Activated CD4-positive, alpha-beta memory T cell treated with anti-CD3 and anti-CD28 coated beads, Interleukin-2, amount 10 ng/mL, durations not matched to agents 7 days and 5 days (primary cell): ENCODE measurements at regions of chr9 and their contacts with region 1.

Region 1: DNA sequence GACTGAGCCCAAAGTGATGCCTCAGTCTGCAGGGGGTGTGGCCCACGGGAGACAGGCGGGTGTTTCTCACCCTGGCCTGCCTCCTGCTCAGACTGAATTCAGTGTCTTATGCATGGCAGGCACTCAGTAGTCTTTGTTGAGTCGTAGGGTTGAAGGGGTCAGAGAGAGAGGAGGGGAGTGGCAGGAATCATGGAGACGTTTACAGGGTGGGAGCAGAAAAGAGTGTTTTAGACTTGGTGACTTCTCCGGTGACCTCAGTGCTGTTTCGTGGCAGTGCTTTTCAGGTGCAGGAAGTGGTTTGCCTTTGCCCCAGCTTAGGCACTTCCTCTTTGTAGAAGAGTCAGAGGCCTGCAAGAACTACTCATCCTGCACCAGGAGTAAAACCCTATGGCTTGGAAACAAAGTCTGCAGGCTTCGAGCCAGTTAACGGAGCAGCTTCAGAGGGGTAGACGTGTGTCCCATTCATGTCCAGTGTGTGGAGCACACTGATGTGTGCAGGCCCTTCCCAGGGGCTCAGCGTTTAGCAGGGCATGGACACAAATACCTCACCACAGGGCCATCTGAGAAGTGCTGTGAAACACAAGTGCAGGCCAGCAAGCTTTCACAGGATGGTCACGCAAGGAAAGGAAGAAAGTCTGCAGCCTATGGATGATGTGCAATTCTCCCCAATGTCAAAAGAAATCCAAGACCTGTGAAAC is 24.5 kb upstream of the SEMA4D start:
- DNase-seq: peak; percentile 88
- H3K4me3 Mint-ChIP-seq: peak overlapping the region; percentile 61
- H3K27ac Mint-ChIP-seq: peak overlapping the region; percentile 100
- H3K4me1 Mint-ChIP-seq: peaks cover 92% of the 10 kb centered on the region
- H3K27me3 Mint-ChIP-seq: no peaks in the 10 kb centered on the region

Region 2: DNA sequence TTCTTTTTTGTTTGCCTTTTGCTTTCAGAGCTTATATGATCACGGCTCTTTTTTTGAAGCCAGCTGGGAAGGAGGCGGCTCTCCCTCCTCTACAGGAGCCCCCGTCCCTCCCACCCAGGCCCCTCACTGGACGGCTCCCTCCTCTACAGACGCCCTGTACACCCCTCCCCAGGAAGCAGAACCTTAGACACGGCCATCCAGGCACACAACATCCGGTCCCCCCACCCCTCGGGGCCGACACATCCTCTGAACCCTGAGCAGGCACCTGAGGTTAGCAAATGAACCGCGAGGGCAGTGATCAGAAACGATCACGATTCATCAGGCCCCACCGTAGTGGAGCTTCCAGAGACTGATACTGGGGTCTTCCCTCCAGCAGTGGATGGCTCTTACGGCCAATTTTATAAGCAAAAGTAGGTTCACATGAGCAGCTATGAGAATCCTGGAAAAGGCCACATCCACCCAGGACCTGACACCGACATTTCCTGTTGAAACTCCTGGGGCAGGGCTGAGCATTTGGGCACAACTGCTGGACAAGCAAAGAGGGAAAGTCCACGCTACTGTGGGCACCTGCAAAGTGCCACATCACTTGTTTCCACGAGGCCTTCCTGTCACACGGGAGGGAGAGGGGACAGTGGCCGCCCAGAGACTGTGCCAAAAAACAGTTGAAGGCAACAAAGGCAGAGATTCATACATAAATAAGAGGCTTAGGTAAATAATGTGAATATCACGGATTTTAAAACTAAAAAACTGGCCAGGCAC is 103.3 kb before region 1 on chr9:
- CTCF ChIA-PET with region 1: no interaction called
- POLR2A ChIA-PET with region 1: interaction called, 25 read pairs
- DNase-seq: peak; percentile 87
- H3K4me3 Mint-ChIP-seq: peak overlapping the region; percentile 78
- H3K27ac Mint-ChIP-seq: peak overlapping the region; percentile 97
- H3K4me1 Mint-ChIP-seq: peaks cover 99% of the 10 kb centered on the region
- H3K27me3 Mint-ChIP-seq: no peaks in the 10 kb centered on the region

Region 3: GRCh38 chr9:89483592-89484522 is 38.6 kb before region 1 on chr9:
- CTCF ChIA-PET with region 1: interaction called, 3 read pairs
- POLR2A ChIA-PET with region 1: interaction called, 18 read pairs
- DNase-seq: peak; percentile 67
- H3K4me3 Mint-ChIP-seq: peak overlapping the region; percentile 80
- H3K27ac Mint-ChIP-seq: peak overlapping the region; percentile 89
- H3K4me1 Mint-ChIP-seq: peaks cover 90% of the 10 kb centered on the region
- H3K27me3 Mint-ChIP-seq: no peaks in the 10 kb centered on the region

Region 4: GRCh38 chr9:89497978-89498851 is 24.2 kb before region 1 on chr9 and contains the start of gene SEMA4D:
- CTCF ChIA-PET with region 1: interaction called, 5 read pairs
- POLR2A ChIA-PET with region 1: interaction called, 77 read pairs
- DNase-seq: peak; percentile 73
- H3K4me3 Mint-ChIP-seq: peak within 1 kb of the TSS; percentile 95
- H3K27ac Mint-ChIP-seq: peak within 1 kb of the TSS; percentile 96
- H3K4me1 Mint-ChIP-seq: peaks cover 83% of the 10 kb centered on the region
- H3K27me3 Mint-ChIP-seq: no peaks in the 10 kb centered on the region
- total RNA-seq, gene SEMA4D: 339 to 350 TPM

Region 5: GRCh38 chr9:89536145-89536574 is 13.8 kb after region 1 on chr9:
- CTCF ChIA-PET with region 1: interaction called, 17 read pairs
- POLR2A ChIA-PET with region 1: interaction called, 124 read pairs
- DNase-seq: peak; percentile 24
- H3K4me3 Mint-ChIP-seq: peak overlapping the region; percentile 53
- H3K27ac Mint-ChIP-seq: peak overlapping the region; percentile 90
- H3K4me1 Mint-ChIP-seq: peaks cover 81% of the 10 kb centered on the region
- H3K27me3 Mint-ChIP-seq: no peaks in the 10 kb centered on the region